ENCODE measurements at regions of chr2 and their contacts with region 1.

Region 1: DNA sequence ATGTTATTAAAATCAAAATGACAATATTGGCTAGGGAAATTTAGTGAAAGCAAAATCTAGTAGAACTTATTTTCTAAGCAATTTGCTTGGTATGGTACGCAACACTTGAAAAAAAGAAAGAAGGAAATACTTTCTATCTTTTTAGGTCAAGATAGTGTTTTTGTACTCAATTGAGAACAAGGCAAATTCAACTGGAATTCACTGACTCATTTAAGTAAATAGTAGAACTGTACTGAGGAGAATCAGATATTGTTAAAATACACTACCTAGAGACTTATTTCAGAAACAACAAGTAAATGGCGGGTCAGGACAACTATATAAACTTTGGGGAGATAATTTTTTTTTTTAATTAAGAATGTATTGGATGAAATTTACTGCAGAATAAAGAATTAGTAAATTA is 18.9 kb downstream of the ZRANB3 start:
- DNase-seq: no peak
- H3K4me3 Mint-ChIP-seq: no peak overlapping the region
- H3K27ac Mint-ChIP-seq: no peak overlapping the region
- H3K4me1 Mint-ChIP-seq: no peaks in the 10 kb centered on the region
- H3K27me3 Mint-ChIP-seq: no peaks in the 10 kb centered on the region
- CTCF ChIP-seq: no peak

Region 2: DNA sequence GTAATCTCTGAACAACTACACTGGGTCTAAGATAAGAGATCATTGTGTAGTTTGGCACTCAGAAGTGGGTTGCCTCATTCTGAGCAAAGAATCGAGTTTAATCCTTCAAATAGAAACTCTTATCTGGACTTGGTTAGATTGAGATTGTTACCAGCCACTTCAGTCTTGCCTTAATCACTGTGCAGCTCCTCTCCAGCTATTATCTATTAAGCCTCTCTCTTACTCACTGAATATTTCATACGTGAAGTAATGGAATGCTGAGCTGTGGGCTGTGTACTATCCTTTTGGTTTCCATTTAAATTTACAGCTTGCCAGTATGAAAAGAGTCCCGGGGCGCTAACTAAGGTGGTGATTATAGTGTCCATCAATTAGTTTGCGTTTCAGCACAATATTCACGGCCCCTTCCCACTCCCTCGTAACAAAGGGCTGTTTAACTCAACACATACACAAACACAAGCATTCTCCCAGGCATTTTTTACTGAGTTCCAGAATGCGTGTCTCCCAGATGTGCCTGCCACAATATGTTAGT is 1878.2 kb before region 1 on chr2:
- CTCF ChIA-PET with region 1: interaction called, 10 read pairs
- intact Hi-C with region 1: no loop called
- DNase-seq: no peak
- H3K4me3 Mint-ChIP-seq: no peak overlapping the region
- H3K27ac Mint-ChIP-seq: no peak overlapping the region
- H3K4me1 Mint-ChIP-seq: peaks cover 11% of the 10 kb centered on the region
- H3K27me3 Mint-ChIP-seq: no peaks in the 10 kb centered on the region
- CTCF ChIP-seq: no peak

Measured in Calu3 (cell line).